Natural killer cell (primary cell): ENCODE measurements at regions of chr19 and their contacts with region 1.

Region 1: DNA sequence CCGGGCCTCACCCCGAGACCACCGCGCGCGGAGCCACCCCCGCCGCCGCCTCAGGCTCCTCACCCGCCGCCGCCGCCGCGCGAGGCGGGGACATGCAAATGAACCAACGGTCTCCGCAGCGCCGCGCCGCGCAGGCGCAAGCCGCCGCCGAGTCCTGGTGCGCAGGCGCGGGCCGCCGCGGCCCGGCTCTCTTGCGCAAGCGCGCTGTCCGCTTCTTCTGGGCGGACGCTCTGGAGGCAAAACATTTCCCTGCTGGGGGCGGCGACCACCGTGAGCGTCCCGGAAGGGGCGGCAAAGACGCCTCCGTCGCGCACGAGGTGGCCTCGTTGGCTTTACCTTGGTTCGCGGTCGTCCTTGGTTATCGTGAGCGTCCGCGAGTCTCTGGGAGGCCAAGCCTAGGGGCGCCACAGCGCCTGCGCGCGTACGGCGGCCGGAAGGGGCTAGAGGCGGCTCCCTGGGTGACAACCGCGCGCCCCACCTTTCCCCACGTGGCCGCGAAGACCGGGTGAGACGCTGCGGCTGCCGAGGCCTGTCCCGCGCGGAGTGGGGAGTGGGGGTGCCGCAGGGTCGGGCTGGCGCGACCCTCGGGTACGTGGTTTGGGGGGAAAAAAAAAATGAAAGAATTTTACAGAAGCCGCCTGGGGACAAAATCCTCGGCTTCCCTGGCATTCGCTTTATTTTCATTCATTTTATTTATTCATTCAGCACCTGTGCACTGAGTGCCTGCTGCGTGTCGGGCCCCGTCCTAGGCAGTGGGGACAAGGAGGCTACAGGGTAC is at the starts of genes ARMC6 and SUGP2:
- DNase-seq: peak; percentile 93 to 96
- ATAC-seq: peak; percentile 74 to 88 (median 81)
- H3K4me3 ChIP-seq: peak within 1 kb of the TSS; percentile 84
- H3K4me3 Mint-ChIP-seq: peak within 1 kb of the TSS; percentile 96
- H3K27ac ChIP-seq: peak within 1 kb of the TSS; percentile 69
- H3K27ac Mint-ChIP-seq: peak within 1 kb of the TSS; percentile 92 to 95
- H3K4me1 ChIP-seq: peaks cover 29% of the 10 kb centered on the region
- H3K4me1 Mint-ChIP-seq: peaks cover 17 to 22% of the 10 kb centered on the region in 2 donors
- H3K27me3 ChIP-seq: no peaks in the 10 kb centered on the region
- H3K27me3 Mint-ChIP-seq: no peaks in the 10 kb centered on the region
- CTCF ChIP-seq: no peak
- total RNA-seq, gene ARMC6: 19.3 to 21.2 (median 21.0) TPM
- total RNA-seq, gene SUGP2: 220 to 237 (median 236) TPM

Region 2: DNA sequence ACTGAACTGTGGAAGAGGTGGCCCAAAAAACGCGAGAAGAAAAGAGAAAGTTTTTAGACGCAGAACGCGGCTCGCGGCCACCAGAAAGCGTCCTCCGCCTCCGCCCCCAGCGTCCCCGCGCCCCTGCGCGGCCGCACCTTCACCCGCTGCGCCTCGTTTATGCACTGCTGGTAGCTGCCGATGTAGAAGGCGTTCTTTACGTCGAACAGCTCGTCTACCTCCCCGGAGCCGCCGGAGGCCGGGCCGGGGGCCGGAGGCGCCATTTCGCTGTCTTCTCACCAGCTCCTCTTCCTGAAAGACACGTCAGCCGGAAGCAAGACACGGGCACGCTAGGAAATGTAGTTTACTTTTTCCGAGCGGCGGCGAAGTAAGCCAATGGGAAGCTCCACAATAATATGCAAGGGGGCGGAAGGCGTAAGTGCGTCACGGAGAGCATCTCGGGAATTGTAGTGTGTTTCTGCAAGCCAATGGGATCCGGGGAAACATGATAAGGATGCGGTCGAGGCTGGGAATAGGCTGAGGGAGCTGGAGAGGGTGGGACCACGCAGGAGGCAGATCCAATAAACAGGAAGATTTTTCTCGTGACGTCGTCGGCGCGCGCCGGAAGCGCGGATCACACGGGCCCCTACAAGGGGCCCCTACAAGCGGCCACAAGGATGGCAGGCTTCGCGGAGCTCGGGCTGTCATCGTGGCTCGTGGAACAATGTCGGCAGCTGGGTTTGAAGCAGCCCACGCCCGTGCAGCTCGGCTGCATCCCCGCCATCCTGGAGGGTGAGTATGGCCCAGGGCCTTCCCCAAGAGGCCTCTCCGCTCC is 114.3 kb before region 1 on chr19 and contains the starts of genes COPE and DDX49:
- intact Hi-C with region 1: loop called (anchors 1 kb)
- DNase-seq: peak; percentile 98 to 100
- ATAC-seq: peak; percentile 90 to 98 (median 92)
- H3K4me3 ChIP-seq: peak within 1 kb of the TSS; percentile 72
- H3K4me3 Mint-ChIP-seq: peak within 1 kb of the TSS; percentile 97
- H3K27ac ChIP-seq: peak within 1 kb of the TSS; percentile 85
- H3K27ac Mint-ChIP-seq: peak within 1 kb of the TSS; percentile 90 to 95
- H3K4me1 ChIP-seq: peaks cover 31% of the 10 kb centered on the region
- H3K4me1 Mint-ChIP-seq: peaks cover 31 to 39% of the 10 kb centered on the region in 2 donors
- H3K27me3 ChIP-seq: no peaks in the 10 kb centered on the region
- H3K27me3 Mint-ChIP-seq: no peaks in the 10 kb centered on the region
- CTCF ChIP-seq: no peak
- total RNA-seq, gene COPE: 204 to 228 (median 218) TPM
- total RNA-seq, gene DDX49: 59.3 to 66.9 (median 62.9) TPM